Activated CD4-positive, alpha-beta T cell treated with anti-CD3 and anti-CD28 coated beads for 36 hours (primary cell): ENCODE measurements at regions of chr7 and their contacts with region 1.

Region 1: GRCh38 chr7:104112623-104113022 is 95.2 kb downstream of the ORC5 start:
- DNase-seq: no peak
- ATAC-seq: no peak
- H3K4me3 Mint-ChIP-seq: no peak overlapping the region
- H3K27ac Mint-ChIP-seq: no peak overlapping the region
- H3K4me1 Mint-ChIP-seq: no peaks in the 10 kb centered on the region
- H3K27me3 Mint-ChIP-seq: peaks cover 8% of the 10 kb centered on the region

Region 2: GRCh38 chr7:104096683-104097082 is 15.9 kb before region 1 on chr7:
- CTCF ChIA-PET with region 1: no interaction called
- POLR2A ChIA-PET with region 1: no interaction called
- intact Hi-C with region 1: no loop called
- DNase-seq: no peak
- ATAC-seq: no peak
- H3K4me3 Mint-ChIP-seq: no peak overlapping the region
- H3K27ac Mint-ChIP-seq: no peak overlapping the region
- H3K4me1 Mint-ChIP-seq: no peaks in the 10 kb centered on the region
- H3K27me3 Mint-ChIP-seq: peaks cover 15% of the 10 kb centered on the region

Region 3: DNA sequence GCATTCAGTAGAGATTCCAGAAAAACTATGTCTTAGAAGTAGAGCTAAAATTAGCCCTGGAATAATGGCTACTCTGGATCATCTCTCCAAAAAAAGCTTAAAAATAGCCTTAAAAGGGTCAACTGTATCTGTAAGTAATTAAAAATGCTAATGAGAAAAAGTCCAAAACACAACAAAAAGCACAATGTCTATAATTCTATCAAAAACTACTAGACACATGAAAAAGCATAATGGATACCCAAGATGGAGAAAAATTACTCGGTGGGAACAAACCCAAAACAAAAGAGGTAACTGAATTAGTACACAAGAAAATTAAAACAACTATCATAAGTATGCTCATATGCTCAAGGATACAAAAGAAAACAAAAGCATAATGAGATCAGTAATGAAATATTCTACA is 79.8 kb after region 1 on chr7:
- CTCF ChIA-PET with region 1: no interaction called
- POLR2A ChIA-PET with region 1: interaction called, 10 read pairs
- intact Hi-C with region 1: no loop called
- DNase-seq: no peak
- ATAC-seq: no peak
- H3K4me3 Mint-ChIP-seq: no peak overlapping the region
- H3K27ac Mint-ChIP-seq: no peak overlapping the region
- H3K4me1 Mint-ChIP-seq: peaks cover 11% of the 10 kb centered on the region
- H3K27me3 Mint-ChIP-seq: no peaks in the 10 kb centered on the region